ENCODE measurements at regions of chr12 and their contacts with region 1.

Region 1: DNA sequence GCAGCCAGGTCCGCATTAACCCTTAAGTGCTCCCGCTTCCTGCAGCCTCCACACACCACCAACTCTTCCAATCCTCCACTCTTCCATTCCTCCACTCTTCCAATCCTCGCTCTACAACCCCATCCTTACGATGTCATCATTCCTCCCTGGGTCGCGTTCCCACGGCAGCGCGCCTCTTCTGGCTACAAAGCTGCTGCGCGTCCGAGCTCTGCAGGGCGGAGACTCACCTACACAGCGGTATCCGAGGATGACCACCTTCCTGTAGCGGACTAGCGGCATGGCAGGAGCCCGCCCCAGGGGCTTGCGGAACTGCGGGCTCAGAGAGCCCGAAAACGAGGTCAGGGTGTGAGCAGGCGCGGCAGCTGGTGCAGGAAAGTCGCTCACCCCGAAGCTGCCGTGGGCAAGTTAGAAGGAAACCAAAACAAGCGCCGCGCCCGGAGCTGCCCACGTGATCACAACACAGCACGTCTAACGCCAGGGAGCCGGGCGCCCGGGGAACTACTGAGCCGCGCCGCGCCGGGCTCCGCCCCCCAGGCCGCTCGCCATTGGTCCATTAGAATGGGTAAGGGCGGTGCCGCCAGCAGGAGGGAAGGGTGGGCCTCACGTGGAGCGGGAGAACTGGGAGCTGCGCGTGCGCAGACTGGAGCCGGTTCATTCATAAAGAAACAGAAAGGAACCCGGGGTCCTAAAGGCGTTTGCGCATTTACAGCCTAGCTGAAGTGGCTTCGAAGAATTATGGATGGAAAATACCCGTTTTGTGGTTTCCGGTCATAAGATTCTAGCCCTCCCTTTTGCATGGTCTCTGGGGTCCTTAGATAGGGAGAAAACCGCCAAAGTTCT is at the start of gene RHEBL1:
- DNase-seq: peak; percentile 100
- ATAC-seq: peak; percentile 100
- H3K4me3 Mint-ChIP-seq: peak within 1 kb of the TSS; percentile 94
- H3K27ac Mint-ChIP-seq: peak within 1 kb of the TSS; percentile 91
- H3K4me1 Mint-ChIP-seq: peaks cover 15% of the 10 kb centered on the region
- H3K27me3 Mint-ChIP-seq: no peaks in the 10 kb centered on the region
- total RNA-seq, gene RHEBL1: 6.7 to 13.3 TPM

Region 2: GRCh38 chr12:49110464-49111155 is 40.9 kb after region 1 on chr12 and contains the start of gene LMBR1L:
- CTCF ChIA-PET with region 1: interaction called, 7 read pairs
- POLR2A ChIA-PET with region 1: interaction called, 3 read pairs
- intact Hi-C with region 1: loop called (anchors 1 kb)
- DNase-seq: peak; percentile 97
- ATAC-seq: peak; percentile 98
- H3K4me3 Mint-ChIP-seq: peak within 1 kb of the TSS; percentile 96
- H3K27ac Mint-ChIP-seq: peak within 1 kb of the TSS; percentile 98
- H3K4me1 Mint-ChIP-seq: peaks cover 29% of the 10 kb centered on the region
- H3K27me3 Mint-ChIP-seq: no peaks in the 10 kb centered on the region
- total RNA-seq, gene LMBR1L: 45.0 to 48.0 TPM

Region 3: GRCh38 chr12:51056244-51056643 is 1986.5 kb after region 1 on chr12:
- CTCF ChIA-PET with region 1: no interaction called
- POLR2A ChIA-PET with region 1: no interaction called
- intact Hi-C with region 1: no loop called
- DNase-seq: no peak
- ATAC-seq: no peak
- H3K4me3 Mint-ChIP-seq: no peak overlapping the region
- H3K27ac Mint-ChIP-seq: no peak overlapping the region
- H3K4me1 Mint-ChIP-seq: peaks cover 7% of the 10 kb centered on the region
- H3K27me3 Mint-ChIP-seq: no peaks in the 10 kb centered on the region